ENCODE measurements at regions of chr2 and their contacts with region 1.

Region 1: DNA sequence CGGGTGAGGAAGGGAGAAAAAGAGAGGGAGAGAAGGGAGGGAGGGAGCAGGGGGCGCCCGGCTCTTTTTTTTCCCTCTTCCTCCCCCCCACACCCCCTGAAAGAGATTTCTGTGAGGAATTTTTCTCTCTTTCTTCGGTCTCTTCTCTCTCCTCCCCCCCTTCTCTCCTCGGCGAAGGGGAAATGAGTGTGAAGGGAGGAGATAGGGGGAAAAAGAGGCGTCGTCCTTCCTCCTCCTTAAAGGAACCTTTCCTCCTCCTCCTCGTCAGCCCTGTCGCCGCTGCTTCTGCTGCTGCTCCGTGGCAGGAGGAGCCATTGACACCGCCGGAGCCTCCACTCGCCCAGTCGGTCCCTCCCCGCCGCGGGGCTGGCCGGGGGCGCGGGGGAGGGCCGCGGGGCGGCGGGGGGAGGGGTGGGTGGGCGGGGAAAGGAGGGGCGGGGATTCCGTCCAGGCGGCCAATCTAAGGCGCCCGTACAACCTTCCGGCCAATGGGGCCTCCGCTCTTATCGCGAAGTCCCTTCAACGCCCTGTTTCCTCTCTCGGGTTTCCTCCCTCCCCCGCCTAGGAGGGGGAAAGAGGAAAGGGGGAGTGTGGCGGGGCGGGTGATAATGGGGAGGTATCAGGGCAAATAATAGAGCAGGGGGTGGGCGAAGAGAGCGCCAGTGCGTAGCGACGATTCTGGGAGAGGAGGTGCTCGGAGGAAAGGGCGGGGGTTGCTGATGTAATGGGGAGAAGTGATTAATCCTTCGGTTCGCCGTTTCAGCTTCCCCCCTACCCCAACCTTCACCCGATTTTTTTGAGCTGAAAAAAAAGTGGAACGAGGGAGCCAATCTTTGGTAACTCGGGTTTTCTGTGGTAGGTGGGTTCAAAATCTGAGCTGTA is at the start of gene FBXO11:
- DNase-seq: peak in 1 of 2 donors; percentile 100
- H3K4me3 ChIP-seq: peak within 1 kb of the TSS; percentile 77 to 97
- H3K27ac ChIP-seq: peak within 1 kb of the TSS; percentile 99
- H3K4me1 ChIP-seq: peaks cover 28% of the 10 kb centered on the region
- H3K27me3 ChIP-seq: no peaks in the 10 kb centered on the region
- CTCF ChIP-seq: peak in 2 of 3 experiments; percentile 41 to 57
- POLR2A ChIP-seq: peak in 1 of 2 donors; percentile 89
- total RNA-seq, gene FBXO11: 35.8 TPM

Region 2: GRCh38 chr2:47782671-47783485 is 123.5 kb before region 1 on chr2 and contains the start of gene MSH6:
- intact Hi-C with region 1: loop called (anchors 5 kb)
- DNase-seq: peak in 1 of 2 donors; percentile 91
- H3K4me3 ChIP-seq: peak within 1 kb of the TSS; percentile 86 to 93
- H3K27ac ChIP-seq: peak within 1 kb of the TSS; percentile 92
- H3K4me1 ChIP-seq: peaks cover 29% of the 10 kb centered on the region
- H3K27me3 ChIP-seq: no peaks in the 10 kb centered on the region
- CTCF ChIP-seq: no peak
- POLR2A ChIP-seq: peak in 1 of 2 donors; percentile 85
- total RNA-seq, gene MSH6: 38.8 TPM

Region 3: DNA sequence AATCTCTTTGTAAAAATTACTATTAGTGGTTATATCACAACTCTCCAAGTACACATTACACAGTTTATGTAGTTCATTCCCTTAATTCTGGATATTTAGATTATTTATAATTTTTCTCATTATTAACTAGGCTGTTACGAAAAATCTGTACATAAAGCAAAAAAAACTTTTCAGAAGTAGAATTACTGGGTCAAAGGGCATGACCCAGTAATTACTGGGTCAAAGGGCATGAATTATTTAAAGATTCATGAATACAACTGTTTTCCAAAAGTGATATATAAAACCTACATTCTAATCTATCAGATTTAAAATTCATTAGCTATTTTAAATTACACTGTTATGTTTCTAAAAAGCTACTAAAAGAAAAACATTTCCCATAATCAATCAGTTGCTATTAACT is 68.1 kb before region 1 on chr2:
- intact Hi-C with region 1: loop called (anchors 2 kb)
- DNase-seq: no peak
- H3K4me3 ChIP-seq: no peak overlapping the region
- H3K27ac ChIP-seq: no peak overlapping the region
- H3K4me1 ChIP-seq: no peaks in the 10 kb centered on the region
- H3K27me3 ChIP-seq: no peaks in the 10 kb centered on the region
- CTCF ChIP-seq: no peak
- POLR2A ChIP-seq: no peak

Region 4: DNA sequence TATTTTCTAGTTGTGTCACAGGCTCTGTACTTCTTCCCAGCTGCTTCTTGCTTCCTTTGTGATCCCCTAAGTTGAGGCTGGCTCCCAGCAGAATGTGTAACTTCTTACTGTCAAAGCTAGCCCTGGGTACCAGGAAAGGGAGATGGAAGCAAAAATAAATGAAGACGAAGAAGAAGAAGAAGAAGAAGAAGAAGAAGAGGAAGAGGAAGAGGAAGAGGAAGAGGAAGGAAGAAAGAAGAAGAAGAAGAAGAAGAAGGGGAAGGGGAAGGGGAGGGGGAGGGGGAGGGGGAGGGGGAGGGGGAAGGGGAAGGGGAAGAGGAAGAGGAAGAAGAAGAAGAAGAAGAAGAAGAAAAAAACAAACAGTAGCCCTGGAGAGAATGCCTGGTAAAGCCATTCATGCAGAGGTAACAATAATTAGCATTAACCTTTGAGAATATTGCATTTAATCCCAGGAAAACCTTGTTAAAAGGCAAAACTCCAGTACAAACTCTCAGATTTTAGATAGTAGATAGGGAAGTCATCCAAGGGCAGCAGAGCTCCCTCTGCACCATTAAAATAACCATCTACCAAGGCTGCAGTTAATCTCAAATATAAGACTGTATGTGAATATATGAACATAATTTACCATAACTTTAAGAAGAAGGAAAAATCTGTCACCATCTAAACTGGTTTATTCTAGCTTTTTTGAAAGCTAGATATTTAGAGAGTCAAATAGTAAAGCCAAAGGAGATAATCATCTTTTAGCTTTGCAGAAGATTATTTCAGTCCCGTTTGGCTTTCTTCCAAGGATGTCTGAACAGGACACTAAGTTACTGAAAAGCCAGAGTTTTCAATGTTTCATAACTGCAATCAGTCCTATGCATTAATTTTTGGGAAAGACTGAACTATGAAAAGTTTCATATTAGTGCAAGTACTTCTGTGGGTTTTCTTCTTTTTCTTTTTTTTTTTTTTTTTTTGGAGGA is 44.2 kb after region 1 on chr2:
- intact Hi-C with region 1: no loop called
- DNase-seq: no peak
- H3K4me3 ChIP-seq: no peak overlapping the region
- H3K27ac ChIP-seq: no peak overlapping the region
- H3K4me1 ChIP-seq: no peaks in the 10 kb centered on the region
- H3K27me3 ChIP-seq: no peaks in the 10 kb centered on the region
- CTCF ChIP-seq: no peak
- POLR2A ChIP-seq: no peak

Measured in vagina (tissue), 2 donors.